ENCODE measurements at regions of chr20 and their contacts with region 1.

Region 1: GRCh38 chr20:18164356-18164755 is 26.7 kb downstream of the KAT14 start:
- DNase-seq: no peak
- H3K4me3 ChIP-seq: no peak overlapping the region
- H3K27ac ChIP-seq: no peak overlapping the region
- H3K4me1 ChIP-seq: no peaks in the 10 kb centered on the region
- H3K27me3 ChIP-seq: no peaks in the 10 kb centered on the region
- CTCF ChIP-seq: no peak
- POLR2A ChIP-seq: no peak

Region 2: GRCh38 chr20:17771206-17772004 is 393.0 kb before region 1 on chr20:
- intact Hi-C with region 1: no loop called
- DNase-seq: no peak
- H3K4me3 ChIP-seq: no peak overlapping the region
- H3K27ac ChIP-seq: no peak overlapping the region
- H3K4me1 ChIP-seq: no peaks in the 10 kb centered on the region
- H3K27me3 ChIP-seq: no peaks in the 10 kb centered on the region
- CTCF ChIP-seq: no peak
- POLR2A ChIP-seq: no peak

Region 3: DNA sequence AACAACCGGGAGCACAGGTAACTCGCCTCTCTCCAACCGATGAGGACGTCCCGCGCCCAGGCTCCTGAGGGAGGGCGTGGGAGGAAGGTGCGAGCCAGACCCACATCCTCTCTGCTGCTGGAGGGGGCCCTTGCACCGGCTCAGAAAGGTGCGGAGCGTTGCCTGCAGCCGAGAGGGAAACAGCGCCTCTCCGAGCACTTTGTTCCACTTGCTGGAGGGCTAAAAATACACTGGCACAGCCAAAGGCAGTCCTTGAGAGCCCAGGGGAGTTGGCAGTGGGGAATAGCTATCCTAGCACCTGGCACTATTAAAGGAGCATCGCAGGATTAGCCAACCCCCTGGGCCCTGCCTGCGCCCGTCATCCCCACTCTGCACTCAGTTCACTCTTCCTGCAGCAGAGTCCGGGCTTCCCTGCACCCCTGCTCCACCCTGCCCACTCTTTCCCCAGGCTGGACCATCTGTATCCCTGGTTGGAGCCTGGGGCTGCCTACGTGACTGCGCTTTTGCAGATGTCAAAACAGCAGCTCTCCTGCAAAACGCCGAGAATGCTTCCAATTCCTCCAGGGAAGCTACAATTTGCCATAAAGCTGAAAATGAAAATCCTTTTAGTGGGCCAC is 304.6 kb before region 1 on chr20:
- intact Hi-C with region 1: no loop called
- DNase-seq: no peak
- H3K4me3 ChIP-seq: no peak overlapping the region
- H3K27ac ChIP-seq: peak overlapping the region; percentile 49 to 62
- H3K4me1 ChIP-seq: peaks cover 0 to 7% of the 10 kb centered on the region in 2 donors
- H3K27me3 ChIP-seq: no peaks in the 10 kb centered on the region
- CTCF ChIP-seq: no peak
- POLR2A ChIP-seq: no peak

Region 4: GRCh38 chr20:18150258-18150657 is 14.1 kb before region 1 on chr20:
- intact Hi-C with region 1: loop called (anchors 1 kb)
- DNase-seq: no peak
- H3K4me3 ChIP-seq: no peak overlapping the region
- H3K27ac ChIP-seq: no peak overlapping the region
- H3K4me1 ChIP-seq: no peaks in the 10 kb centered on the region
- H3K27me3 ChIP-seq: no peaks in the 10 kb centered on the region
- CTCF ChIP-seq: no peak
- POLR2A ChIP-seq: no peak